Panc1 (cell line): ENCODE measurements at regions of chr3 and their contacts with region 1.

Region 1: GRCh38 chr3:193157051-193157450 is 84.0 kb upstream of the PLAAT1 start:
- DNase-seq: no peak
- ATAC-seq: no peak
- H3K4me3 ChIP-seq: no peak overlapping the region
- H3K27ac ChIP-seq: no peak overlapping the region
- H3K4me1 ChIP-seq: no peaks in the 10 kb centered on the region
- H3K27me3 ChIP-seq: no peaks in the 10 kb centered on the region
- CTCF ChIP-seq: no peak

Region 2: GRCh38 chr3:192409825-192410683 is 747.0 kb before region 1 on chr3:
- CTCF ChIA-PET with region 1: no interaction called
- POLR2A ChIA-PET with region 1: no interaction called
- in situ Hi-C with region 1: no loop called
- intact Hi-C with region 1: no loop called
- DNase-seq: no peak
- ATAC-seq: peak; percentile 52
- H3K4me3 ChIP-seq: peak overlapping the region in 1 of 2 experiments; percentile 33; a peak in 2 of 4 replicates
- H3K27ac ChIP-seq: no peak overlapping the region
- H3K4me1 ChIP-seq: no peaks in the 10 kb centered on the region
- H3K27me3 ChIP-seq: no peaks in the 10 kb centered on the region
- CTCF ChIP-seq: peak; percentile 27

Region 3: GRCh38 chr3:193168911-193169310 is 11.9 kb after region 1 on chr3:
- CTCF ChIA-PET with region 1: no interaction called
- POLR2A ChIA-PET with region 1: no interaction called
- in situ Hi-C with region 1: no loop called
- intact Hi-C with region 1: loop called (anchors 1 kb)
- DNase-seq: no peak
- ATAC-seq: no peak
- H3K4me3 ChIP-seq: no peak overlapping the region
- H3K27ac ChIP-seq: no peak overlapping the region
- H3K4me1 ChIP-seq: no peaks in the 10 kb centered on the region
- H3K27me3 ChIP-seq: no peaks in the 10 kb centered on the region; the same call in 1 of the 2 replicates
- CTCF ChIP-seq: no peak

Region 4: GRCh38 chr3:193214445-193214844 is 57.4 kb after region 1 on chr3:
- CTCF ChIA-PET with region 1: no interaction called
- POLR2A ChIA-PET with region 1: no interaction called
- in situ Hi-C with region 1: no loop called
- intact Hi-C with region 1: no loop called
- DNase-seq: no peak
- ATAC-seq: no peak
- H3K4me3 ChIP-seq: no peak overlapping the region
- H3K27ac ChIP-seq: no peak overlapping the region
- H3K4me1 ChIP-seq: no peaks in the 10 kb centered on the region
- H3K27me3 ChIP-seq: no peaks in the 10 kb centered on the region
- CTCF ChIP-seq: no peak